Vagina (tissue), 2 donors: ENCODE measurements at regions of chr1 and their contacts with region 1.

Region 1: DNA sequence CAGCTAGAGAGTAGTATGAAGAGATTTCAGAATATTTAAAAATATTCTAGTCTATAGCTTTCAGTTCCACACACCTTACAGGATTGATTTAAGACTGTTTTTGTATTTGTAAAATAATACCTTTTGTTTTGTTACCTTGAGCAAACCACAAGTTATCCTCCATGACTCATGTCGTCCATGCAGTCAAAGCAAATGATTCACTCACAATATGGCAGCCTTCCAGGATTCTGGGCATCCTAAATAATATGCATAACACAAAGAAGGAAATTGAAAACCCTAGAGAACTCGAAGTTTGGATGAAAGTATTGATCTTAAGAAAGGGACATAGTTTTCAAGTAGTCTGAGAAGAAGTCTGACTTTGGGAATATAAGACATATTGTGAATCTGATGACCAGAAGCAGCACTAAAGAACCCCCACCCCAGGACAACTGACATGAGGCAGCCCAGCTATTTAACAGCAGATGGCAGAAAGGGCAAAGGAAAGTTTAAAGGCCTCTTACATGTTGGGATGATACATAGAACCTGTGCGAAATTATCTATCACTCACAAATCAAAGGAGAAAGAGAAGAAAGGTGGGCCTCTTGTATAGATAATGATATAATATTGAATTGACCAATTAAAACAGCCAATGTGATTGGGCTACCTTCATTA is 857.9 kb downstream of the BRINP3 start:
- DNase-seq: no peak
- H3K4me3 ChIP-seq: no peak overlapping the region
- H3K27ac ChIP-seq: no peak overlapping the region
- H3K4me1 ChIP-seq: no peaks in the 10 kb centered on the region
- H3K27me3 ChIP-seq: no peaks in the 10 kb centered on the region
- CTCF ChIP-seq: no peak
- POLR2A ChIP-seq: no peak

Region 2: GRCh38 chr1:189524506-189524905 is 95.3 kb before region 1 on chr1:
- intact Hi-C with region 1: no loop called
- DNase-seq: no peak
- H3K4me3 ChIP-seq: no peak overlapping the region
- H3K27ac ChIP-seq: no peak overlapping the region
- H3K4me1 ChIP-seq: no peaks in the 10 kb centered on the region
- H3K27me3 ChIP-seq: no peaks in the 10 kb centered on the region
- CTCF ChIP-seq: no peak
- POLR2A ChIP-seq: no peak

Region 3: GRCh38 chr1:189673218-189673617 is 53.4 kb after region 1 on chr1:
- intact Hi-C with region 1: loop called (anchors 5 kb)
- DNase-seq: no peak
- H3K4me3 ChIP-seq: no peak overlapping the region
- H3K27ac ChIP-seq: no peak overlapping the region
- H3K4me1 ChIP-seq: no peaks in the 10 kb centered on the region
- H3K27me3 ChIP-seq: no peaks in the 10 kb centered on the region
- CTCF ChIP-seq: no peak
- POLR2A ChIP-seq: no peak